Sigmoid colon (tissue), 7 donors: ENCODE measurements at regions of chr2 and their contacts with region 1.

Region 1: DNA sequence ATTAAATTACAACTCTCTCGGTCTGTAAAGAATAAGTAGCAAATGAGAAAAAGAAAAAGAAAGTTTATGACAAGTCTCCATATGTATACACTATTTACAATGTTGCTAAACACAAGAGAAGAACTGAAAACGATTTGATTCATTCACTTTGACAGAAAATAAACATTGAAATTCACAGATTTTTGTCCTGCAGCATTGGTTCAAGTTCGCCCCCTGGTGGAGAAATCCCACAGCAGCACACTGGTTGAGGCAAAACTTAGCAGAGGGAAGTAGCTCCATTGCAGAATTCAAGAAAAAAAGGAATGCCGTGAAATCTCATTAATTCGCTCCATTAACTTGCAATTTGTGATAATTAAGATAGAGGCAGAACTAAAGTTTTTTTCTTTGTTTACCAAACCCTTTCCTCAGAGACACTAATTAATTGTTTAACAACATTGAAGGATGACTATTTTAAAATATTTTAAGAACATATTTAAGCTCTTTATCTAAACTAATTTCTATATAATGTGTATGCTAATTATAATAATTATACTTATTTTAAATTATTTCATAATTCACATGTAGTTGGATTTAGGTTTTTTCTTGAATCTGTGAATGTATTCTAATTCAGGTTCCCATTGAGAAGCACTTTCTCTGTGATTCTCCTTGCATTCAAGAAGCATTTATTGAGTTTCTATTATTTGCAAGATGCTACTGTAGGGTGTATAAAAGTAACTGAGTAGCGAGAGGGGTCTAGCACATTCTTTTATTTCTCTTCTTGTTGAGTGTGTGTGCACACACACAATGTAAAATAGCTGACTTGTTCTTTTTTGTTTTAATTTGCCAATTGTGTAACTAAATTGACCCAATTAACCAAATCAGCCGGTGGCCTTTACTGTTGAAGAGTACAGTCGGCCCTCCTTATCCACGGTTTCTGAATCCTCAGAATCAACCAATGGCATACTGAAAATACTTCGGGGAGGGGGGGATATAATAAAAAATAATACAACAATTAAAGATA is 74.1 kb downstream of the COL4A3 start:
- DNase-seq: peak; percentile 75
- H3K4me3 ChIP-seq: no peak overlapping the region
- H3K27ac ChIP-seq: no peak overlapping the region
- H3K4me1 ChIP-seq: peaks cover 0 to 7% (median 0%) of the 10 kb centered on the region in 4 donors
- H3K27me3 ChIP-seq: no peaks in the 10 kb centered on the region
- CTCF ChIP-seq: peak; percentile 38 to 87 (median 81)
- EP300 ChIP-seq: no peak
- POLR2A ChIP-seq: no peak

Region 2: DNA sequence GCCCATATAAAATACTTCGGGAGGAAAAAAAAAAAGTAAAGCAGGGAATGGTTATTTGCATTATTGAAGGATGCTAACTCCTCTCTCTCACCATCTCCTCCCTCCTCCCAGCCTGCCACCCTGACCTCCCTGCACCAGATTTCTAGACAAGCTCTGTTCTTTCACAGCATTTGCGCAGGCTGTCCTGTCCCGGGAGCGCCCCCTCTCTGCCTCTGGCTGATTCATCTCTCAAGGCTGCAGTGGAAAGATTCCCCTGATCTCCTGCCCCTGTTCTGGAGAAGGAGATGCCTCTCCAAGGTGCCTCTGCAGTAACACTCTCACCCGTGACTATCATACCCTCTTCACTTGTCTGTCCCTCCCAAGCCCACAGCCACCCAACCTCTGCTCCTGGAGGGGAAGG is 113.0 kb before region 1 on chr2:
- intact Hi-C with region 1: loop called (anchors 1 kb)
- DNase-seq: no peak
- H3K4me3 ChIP-seq: no peak overlapping the region
- H3K27ac ChIP-seq: no peak overlapping the region
- H3K4me1 ChIP-seq: no peaks in the 10 kb centered on the region
- H3K27me3 ChIP-seq: no peaks in the 10 kb centered on the region
- CTCF ChIP-seq: no peak
- EP300 ChIP-seq: no peak
- POLR2A ChIP-seq: no peak

Region 3: DNA sequence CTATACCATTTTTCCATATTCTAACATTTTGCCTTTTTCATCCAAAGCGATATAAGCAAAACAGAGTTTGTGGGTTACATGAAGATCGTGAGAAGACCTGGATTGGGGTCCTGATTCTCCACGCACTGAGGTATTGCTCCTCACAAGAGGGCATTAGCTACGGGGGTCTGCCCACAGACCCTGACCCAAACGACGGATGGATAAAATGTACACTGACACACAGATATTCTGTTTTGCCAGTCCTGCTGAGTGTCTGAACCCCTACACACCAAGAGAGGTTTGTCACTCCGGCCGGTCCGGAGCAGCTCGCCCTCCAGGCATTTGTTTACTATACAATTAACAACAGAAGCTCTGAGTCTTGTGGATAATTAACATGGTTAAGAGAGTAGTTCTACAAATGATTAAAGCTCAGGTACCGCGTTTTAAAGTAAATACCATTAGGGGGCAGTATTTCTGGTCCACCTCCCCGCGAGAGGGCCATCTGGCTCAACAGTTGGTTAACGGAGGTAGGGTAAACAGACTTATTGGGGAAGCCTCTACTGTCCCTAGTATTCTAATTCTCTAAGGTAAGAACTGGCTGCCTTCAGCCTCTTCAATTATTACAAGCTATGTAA is 535.6 kb after region 1 on chr2:
- intact Hi-C with region 1: no loop called
- DNase-seq: no peak
- H3K4me3 ChIP-seq: no peak overlapping the region
- H3K27ac ChIP-seq: no peak overlapping the region
- H3K4me1 ChIP-seq: no peaks in the 10 kb centered on the region
- H3K27me3 ChIP-seq: no peaks in the 10 kb centered on the region
- CTCF ChIP-seq: no peak
- EP300 ChIP-seq: no peak
- POLR2A ChIP-seq: no peak